ENCODE measurements at regions of chr7 and their contacts with region 1.

Region 1: GRCh38 chr7:54292171-54292925 is 249.8 kb upstream of the VSTM2A start:
- DNase-seq: no peak
- ATAC-seq: no peak
- H3K4me3 ChIP-seq: no peak overlapping the region
- H3K4me3 Mint-ChIP-seq: no peak overlapping the region
- H3K27ac ChIP-seq: no peak overlapping the region
- H3K27ac Mint-ChIP-seq: no peak overlapping the region
- H3K4me1 ChIP-seq: no peaks in the 10 kb centered on the region
- H3K4me1 Mint-ChIP-seq: no peaks in the 10 kb centered on the region
- H3K27me3 ChIP-seq: no peaks in the 10 kb centered on the region
- H3K27me3 Mint-ChIP-seq: no peaks in the 10 kb centered on the region
- CTCF ChIP-seq: no peak

Region 2: DNA sequence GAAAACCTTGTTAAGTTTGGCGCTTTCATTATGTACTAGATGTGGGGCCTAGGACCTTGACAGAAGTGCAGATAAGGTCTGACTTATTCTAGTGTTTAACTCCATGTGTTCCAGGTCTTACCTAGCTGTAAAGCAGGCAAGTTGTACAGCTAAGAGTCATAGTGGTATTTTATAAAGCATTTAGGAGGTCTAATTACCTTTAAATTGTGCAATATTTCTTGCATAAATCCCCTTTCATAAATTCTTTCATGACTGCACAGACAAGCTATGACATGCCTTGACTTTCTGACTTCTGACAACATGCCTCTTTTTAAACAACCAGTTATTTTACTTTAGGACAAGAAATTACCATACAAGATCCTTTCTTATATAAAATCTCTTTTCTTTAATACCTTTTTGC is 98.2 kb after region 1 on chr7:
- CTCF ChIA-PET with region 1: no interaction called
- POLR2A ChIA-PET with region 1: no interaction called
- intact Hi-C with region 1: loop called in 1 of 2 experiments (anchors 5 kb)
- DNase-seq: no peak
- ATAC-seq: no peak
- H3K4me3 ChIP-seq: no peak overlapping the region
- H3K4me3 Mint-ChIP-seq: no peak overlapping the region
- H3K27ac ChIP-seq: no peak overlapping the region
- H3K27ac Mint-ChIP-seq: no peak overlapping the region
- H3K4me1 ChIP-seq: no peaks in the 10 kb centered on the region
- H3K4me1 Mint-ChIP-seq: no peaks in the 10 kb centered on the region
- H3K27me3 ChIP-seq: no peaks in the 10 kb centered on the region
- H3K27me3 Mint-ChIP-seq: no peaks in the 10 kb centered on the region
- CTCF ChIP-seq: no peak